GM12878 (cell line): ENCODE measurements at regions of chr20 and their contacts with region 1.

Region 1: GRCh38 chr20:6994452-6994851 is 227.0 kb downstream of the BMP2 start:
- DNase-seq: no peak
- ATAC-seq: no peak; the same call in 2 of the 3 replicates
- H3K4me3 ChIP-seq: no peak overlapping the region
- H3K27ac ChIP-seq: no peak overlapping the region
- H3K4me1 ChIP-seq: no peaks in the 10 kb centered on the region
- H3K27me3 ChIP-seq: no peaks in the 10 kb centered on the region
- CTCF ChIP-seq: no peak
- EP300 ChIP-seq: no peak
- POLR2A ChIP-seq: no peak
- RAD21 ChIP-seq: no peak

Region 2: GRCh38 chr20:6978131-6978530 is 16.3 kb before region 1 on chr20:
- CTCF ChIA-PET with region 1: interaction called, 4 read pairs
- POLR2A ChIA-PET with region 1: interaction called, 3 read pairs
- RAD21 ChIA-PET with region 1: interaction called, 4 read pairs
- SMC1A ChIA-PET with region 1: interaction called, 12 read pairs
- in situ Hi-C with region 1: no loop called
- intact Hi-C with region 1: no loop called
- DNase-seq: no peak
- ATAC-seq: no peak
- H3K4me3 ChIP-seq: no peak overlapping the region
- H3K27ac ChIP-seq: no peak overlapping the region
- H3K4me1 ChIP-seq: no peaks in the 10 kb centered on the region
- H3K27me3 ChIP-seq: no peaks in the 10 kb centered on the region
- CTCF ChIP-seq: no peak
- EP300 ChIP-seq: no peak
- POLR2A ChIP-seq: no peak
- RAD21 ChIP-seq: no peak